Aorta (tissue), 5 donors: ENCODE measurements at regions of chr4 and their contacts with region 1.

Region 1: GRCh38 chr4:150078637-150079581 is 664 bp downstream of the DCLK2 start:
- DNase-seq: peak; percentile 76 to 90
- ATAC-seq: peak; percentile 74
- H3K4me3 ChIP-seq: peak overlapping the region; percentile 86 to 87
- H3K27ac ChIP-seq: peak overlapping the region; percentile 53 to 72
- H3K4me1 ChIP-seq: peaks cover 0 to 8% of the 10 kb centered on the region in 2 donors
- H3K27me3 ChIP-seq: no peaks in the 10 kb centered on the region

Region 2: DNA sequence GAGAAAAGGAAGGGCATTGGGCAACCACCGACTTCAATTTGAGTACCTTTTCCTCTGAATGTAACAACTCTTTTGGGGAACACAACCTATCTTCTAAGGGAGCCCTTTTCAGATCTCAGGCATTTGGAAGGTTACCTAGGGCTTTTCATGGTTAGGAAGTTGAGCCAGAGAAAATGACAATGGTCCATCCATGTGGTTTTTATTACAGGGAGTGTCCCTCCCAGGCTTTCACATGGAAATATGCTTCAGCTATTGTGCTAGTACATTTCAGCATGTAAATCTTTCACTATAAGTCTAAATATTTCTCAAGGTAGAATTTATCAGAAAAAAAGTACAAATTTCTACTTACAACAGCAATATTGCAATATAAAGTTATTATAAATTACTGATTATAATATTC is 523.1 kb before region 1 on chr4:
- intact Hi-C with region 1: no loop called
- DNase-seq: no peak
- ATAC-seq: no peak
- H3K4me3 ChIP-seq: no peak overlapping the region
- H3K27ac ChIP-seq: no peak overlapping the region
- H3K4me1 ChIP-seq: no peaks in the 10 kb centered on the region
- H3K27me3 ChIP-seq: no peaks in the 10 kb centered on the region

Region 3: DNA sequence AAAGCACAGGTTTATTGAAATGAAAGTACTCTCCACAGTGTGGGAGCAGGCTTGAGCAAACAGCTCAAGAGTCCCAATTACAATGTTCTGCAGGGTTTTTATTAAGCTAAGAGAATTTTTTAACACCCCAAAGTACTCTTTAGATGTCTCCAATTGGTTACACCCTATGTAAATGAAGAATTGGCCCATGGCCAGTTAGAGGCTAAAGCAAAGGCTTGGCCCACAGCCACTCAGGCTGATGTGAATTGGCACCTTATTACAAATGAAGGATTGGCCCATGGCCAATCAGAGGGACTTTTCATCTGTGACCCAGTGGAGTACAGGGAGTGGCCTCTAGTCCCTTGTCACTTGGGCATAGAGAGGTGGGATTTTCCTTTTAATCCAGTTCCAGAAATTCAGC is 233.2 kb before region 1 on chr4:
- intact Hi-C with region 1: no loop called
- DNase-seq: no peak
- ATAC-seq: no peak
- H3K4me3 ChIP-seq: no peak overlapping the region
- H3K27ac ChIP-seq: no peak overlapping the region
- H3K4me1 ChIP-seq: no peaks in the 10 kb centered on the region
- H3K27me3 ChIP-seq: no peaks in the 10 kb centered on the region

Region 4: GRCh38 chr4:150010525-150011126 is 68.3 kb before region 1 on chr4:
- intact Hi-C with region 1: loop called (anchors 5 kb)
- DNase-seq: no peak
- ATAC-seq: peak; percentile 77
- H3K4me3 ChIP-seq: no peak overlapping the region
- H3K27ac ChIP-seq: no peak overlapping the region
- H3K4me1 ChIP-seq: peaks cover 0 to 5% of the 10 kb centered on the region in 2 donors
- H3K27me3 ChIP-seq: no peaks in the 10 kb centered on the region

Region 5: DNA sequence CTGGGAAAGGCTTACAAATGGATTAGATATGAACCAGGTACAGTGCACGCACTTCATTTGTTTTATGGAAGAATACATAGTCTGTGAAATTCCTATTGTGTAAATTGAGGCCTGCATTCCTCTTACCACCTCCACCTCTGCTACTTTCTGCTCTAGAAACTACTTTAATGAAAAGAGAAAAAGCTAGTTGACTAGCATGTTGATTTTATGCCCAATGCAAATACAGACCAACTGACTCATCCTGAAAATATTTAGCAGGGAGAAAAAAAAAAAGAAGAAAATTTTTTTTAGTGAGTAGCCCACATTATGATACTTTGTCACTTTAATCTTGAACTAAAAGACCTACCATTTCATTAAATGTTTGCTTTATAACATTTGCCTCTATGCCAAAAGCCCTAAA is 40.6 kb after region 1 on chr4:
- intact Hi-C with region 1: loop called in 1 of 2 experiments (anchors 5 kb)
- DNase-seq: no peak
- ATAC-seq: no peak
- H3K4me3 ChIP-seq: no peak overlapping the region
- H3K27ac ChIP-seq: no peak overlapping the region
- H3K4me1 ChIP-seq: peaks cover 2 to 5% of the 10 kb centered on the region in 2 donors
- H3K27me3 ChIP-seq: no peaks in the 10 kb centered on the region

Region 6: GRCh38 chr4:150209140-150209829 is 130.4 kb after region 1 on chr4:
- intact Hi-C with region 1: loop called in 1 of 2 experiments (anchors 10 kb)
- DNase-seq: peak; percentile 76 to 89
- ATAC-seq: peak; percentile 71
- H3K4me3 ChIP-seq: no peak overlapping the region
- H3K27ac ChIP-seq: no peak overlapping the region
- H3K4me1 ChIP-seq: peaks cover 0 to 3% of the 10 kb centered on the region in 2 donors
- H3K27me3 ChIP-seq: no peaks in the 10 kb centered on the region

Region 7: GRCh38 chr4:150237110-150237857 is 158.4 kb after region 1 on chr4:
- intact Hi-C with region 1: loop called (anchors 5 to 10 kb)
- DNase-seq: no peak
- ATAC-seq: peak; percentile 63
- H3K4me3 ChIP-seq: no peak overlapping the region
- H3K27ac ChIP-seq: peak overlapping the region in 1 of 2 donors; percentile 98
- H3K4me1 ChIP-seq: peaks cover 0 to 4% of the 10 kb centered on the region in 2 donors
- H3K27me3 ChIP-seq: no peaks in the 10 kb centered on the region